Aorta (tissue), 5 donors: ENCODE measurements at regions of chr3 and their contacts with region 1.

Region 1: DNA sequence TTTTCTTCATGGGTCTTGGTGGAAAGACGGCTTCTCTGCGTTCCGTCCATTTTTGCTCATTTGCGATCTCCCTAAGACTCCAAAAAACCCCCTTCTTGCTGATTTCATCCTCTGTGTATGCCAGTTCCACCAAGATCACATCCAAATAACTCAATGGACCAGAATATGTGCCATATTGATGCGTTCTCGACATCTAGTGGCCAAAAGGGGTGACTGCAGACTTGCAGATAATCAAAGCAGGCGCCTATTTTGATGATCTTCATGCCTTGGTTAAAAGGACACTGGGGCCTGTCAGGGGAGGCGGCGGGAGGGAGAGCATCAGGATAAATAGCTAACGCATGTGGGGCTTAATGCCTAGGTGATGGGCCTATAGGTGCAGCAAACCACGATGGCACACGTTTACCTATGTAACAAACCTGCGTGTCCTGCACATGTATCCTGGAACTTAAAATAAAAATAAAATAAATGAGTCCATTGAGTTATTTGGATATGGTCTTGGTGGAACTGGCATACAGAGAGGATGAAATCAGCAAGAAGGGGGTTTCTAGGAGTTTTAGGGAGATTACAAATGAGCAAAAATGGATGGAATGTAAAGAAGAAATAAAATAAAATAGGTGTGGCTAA is 104.2 kb upstream of the RAD18 start:
- DNase-seq: no peak
- ATAC-seq: peak; percentile 72
- H3K4me3 ChIP-seq: no peak overlapping the region
- H3K27ac ChIP-seq: no peak overlapping the region
- H3K4me1 ChIP-seq: no peaks in the 10 kb centered on the region
- H3K27me3 ChIP-seq: peaks cover 0 to 2% of the 10 kb centered on the region in 2 donors

Region 2: GRCh38 chr3:8970971-8971589 is 96.4 kb before region 1 on chr3:
- intact Hi-C with region 1: loop called (anchors 5 kb)
- DNase-seq: no peak
- ATAC-seq: peak; percentile 85
- H3K4me3 ChIP-seq: no peak overlapping the region
- H3K27ac ChIP-seq: no peak overlapping the region
- H3K4me1 ChIP-seq: no peaks in the 10 kb centered on the region
- H3K27me3 ChIP-seq: no peaks in the 10 kb centered on the region

Region 3: GRCh38 chr3:8987645-8988383 is 79.7 kb before region 1 on chr3:
- intact Hi-C with region 1: loop called (anchors 2 to 5 kb)
- DNase-seq: peak; percentile 77 to 85
- ATAC-seq: peak; percentile 57
- H3K4me3 ChIP-seq: no peak overlapping the region
- H3K27ac ChIP-seq: no peak overlapping the region
- H3K4me1 ChIP-seq: no peaks in the 10 kb centered on the region
- H3K27me3 ChIP-seq: no peaks in the 10 kb centered on the region

Region 4: DNA sequence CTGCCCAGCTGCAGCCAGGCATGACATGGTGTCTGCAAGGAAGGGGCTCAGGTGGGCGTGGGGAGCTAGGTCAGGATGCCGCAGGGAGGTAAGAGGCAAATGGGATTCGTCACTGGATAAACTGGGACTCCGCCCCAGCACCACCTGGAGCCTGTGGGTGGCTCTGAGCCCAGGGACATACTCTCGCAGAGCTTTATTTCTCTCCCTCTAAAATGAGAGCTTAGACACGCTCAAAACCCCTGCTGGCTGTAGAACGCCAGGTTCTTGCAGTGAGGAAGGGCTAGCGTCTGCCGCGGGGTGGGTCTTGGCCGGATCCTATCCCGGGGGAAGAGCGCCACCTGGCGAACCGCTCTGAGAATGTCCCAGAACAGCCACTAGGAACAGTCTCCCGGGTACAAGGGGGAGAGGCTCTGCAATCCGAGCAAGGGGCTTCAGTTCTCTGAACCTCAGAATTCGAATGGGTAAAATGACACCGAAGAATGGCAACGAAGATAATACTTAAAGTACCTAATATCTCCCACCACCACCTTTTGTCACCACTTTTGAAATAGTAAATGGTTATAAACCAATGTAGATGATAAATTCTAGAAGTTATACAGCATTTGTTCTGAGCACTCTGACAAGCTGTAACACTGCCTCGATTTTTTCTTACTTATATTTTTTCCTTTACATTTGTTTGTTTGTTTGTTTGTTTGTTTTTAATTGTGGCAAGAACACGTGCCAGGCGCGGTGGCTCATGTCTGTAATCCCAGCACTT is 235.1 kb after region 1 on chr3:
- intact Hi-C with region 1: loop called (anchors 5 to 10 kb)
- DNase-seq: peak; percentile 82 to 93
- ATAC-seq: peak; percentile 94
- H3K4me3 ChIP-seq: no peak overlapping the region
- H3K27ac ChIP-seq: no peak overlapping the region
- H3K4me1 ChIP-seq: no peaks in the 10 kb centered on the region
- H3K27me3 ChIP-seq: no peaks in the 10 kb centered on the region